CD14-positive monocyte (primary cell): ENCODE measurements at regions of chr14 and their contacts with region 1.

Region 1: GRCh38 chr14:61296719-61297502 is 15.8 kb upstream of the TMEM30B start:
- DNase-seq: peak; percentile 21 to 24 (median 24)
- H3K4me3 ChIP-seq: no peak overlapping the region
- H3K4me3 Mint-ChIP-seq: no peak overlapping the region
- H3K27ac ChIP-seq: no peak overlapping the region
- H3K27ac Mint-ChIP-seq: no peak overlapping the region
- H3K4me1 ChIP-seq: no peaks in the 10 kb centered on the region
- H3K4me1 Mint-ChIP-seq: no peaks in the 10 kb centered on the region
- H3K27me3 ChIP-seq: no peaks in the 10 kb centered on the region
- H3K27me3 Mint-ChIP-seq: peaks cover 2 to 6% (median 3%) of the 10 kb centered on the region in 3 donors
- CTCF ChIP-seq: peak; percentile 79

Region 2: GRCh38 chr14:61034416-61035120 is 262.3 kb before region 1 on chr14:
- intact Hi-C with region 1: no loop called
- DNase-seq: peak in 2 of 3 donors; percentile 7 to 22
- H3K4me3 ChIP-seq: no peak overlapping the region
- H3K4me3 Mint-ChIP-seq: no peak overlapping the region
- H3K27ac ChIP-seq: peak overlapping the region in 1 of 2 donors; percentile 43
- H3K27ac Mint-ChIP-seq: peak overlapping the region in 2 of 7 donors; percentile 5 to 10
- H3K4me1 ChIP-seq: peaks cover 9 to 11% of the 10 kb centered on the region in 2 donors
- H3K4me1 Mint-ChIP-seq: peaks cover 11% of the 10 kb centered on the region
- H3K27me3 ChIP-seq: no peaks in the 10 kb centered on the region
- H3K27me3 Mint-ChIP-seq: no peaks in the 10 kb centered on the region
- CTCF ChIP-seq: no peak

Region 3: DNA sequence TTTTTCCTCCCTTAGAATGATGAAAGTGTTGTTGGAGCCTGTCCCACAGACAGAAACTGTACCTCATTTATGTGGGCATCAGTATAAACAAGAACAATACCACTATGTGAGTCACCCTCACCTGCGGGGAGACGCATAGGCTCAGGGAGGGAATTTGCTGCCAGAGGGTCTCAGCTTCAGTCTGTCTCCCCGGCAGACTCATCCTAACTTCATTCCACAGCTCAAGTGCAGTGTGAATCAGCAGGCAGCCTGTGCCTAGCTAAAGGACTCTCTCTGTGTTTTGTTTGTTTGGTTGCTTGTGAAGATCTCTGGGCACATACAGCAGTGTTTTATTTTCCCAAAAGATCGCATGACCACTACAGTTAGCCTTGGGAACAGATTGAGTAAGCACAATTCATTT is 123.4 kb after region 1 on chr14:
- intact Hi-C with region 1: loop called in 1 of 2 experiments (anchors 10 kb)
- DNase-seq: no peak
- H3K4me3 ChIP-seq: no peak overlapping the region
- H3K4me3 Mint-ChIP-seq: no peak overlapping the region
- H3K27ac ChIP-seq: no peak overlapping the region
- H3K27ac Mint-ChIP-seq: peak overlapping the region in 1 of 7 donors; percentile 33
- H3K4me1 ChIP-seq: peaks cover 10 to 12% of the 10 kb centered on the region in 2 donors
- H3K4me1 Mint-ChIP-seq: peaks cover 24% of the 10 kb centered on the region
- H3K27me3 ChIP-seq: no peaks in the 10 kb centered on the region
- H3K27me3 Mint-ChIP-seq: no peaks in the 10 kb centered on the region
- CTCF ChIP-seq: no peak